ENCODE measurements at regions of chr1 and their contacts with region 1.

Region 1: GRCh38 chr1:147273409-147274336 is 31.2 kb downstream of the CHD1L start:
- DNase-seq: peak in 1 of 2 donors; percentile 73
- ATAC-seq: peak in 2 of 3 donors; percentile 61 to 64
- H3K4me3 ChIP-seq: no peak overlapping the region
- H3K4me3 Mint-ChIP-seq: no peak overlapping the region
- H3K27ac ChIP-seq: no peak overlapping the region
- H3K27ac Mint-ChIP-seq: no peak overlapping the region
- H3K4me1 ChIP-seq: no peaks in the 10 kb centered on the region
- H3K4me1 Mint-ChIP-seq: peaks cover 4 to 5% of the 10 kb centered on the region in 2 donors
- H3K27me3 ChIP-seq: no peaks in the 10 kb centered on the region
- H3K27me3 Mint-ChIP-seq: no peaks in the 10 kb centered on the region
- CTCF ChIP-seq: peak; percentile 65

Region 2: DNA sequence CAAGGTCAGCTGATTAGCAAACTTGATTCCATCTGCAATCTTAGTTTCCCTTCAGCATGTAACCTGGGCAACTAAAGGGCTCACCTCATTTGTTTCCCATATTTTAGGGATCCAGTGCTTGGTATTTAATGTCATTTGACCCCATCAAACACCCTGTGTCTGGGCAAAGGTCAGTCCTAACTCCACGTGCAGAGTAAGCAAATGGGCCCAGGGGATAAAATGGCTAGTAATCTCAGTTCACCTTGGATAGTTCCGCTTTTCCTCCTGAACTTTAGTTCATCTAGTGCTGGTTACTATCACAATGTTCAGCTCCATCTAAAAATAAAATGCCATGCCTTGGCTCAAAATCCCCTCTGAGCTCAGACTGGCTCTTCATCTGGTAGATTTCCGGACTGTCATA is 120.9 kb before region 1 on chr1:
- intact Hi-C with region 1: no loop called
- DNase-seq: no peak
- ATAC-seq: no peak
- H3K4me3 ChIP-seq: no peak overlapping the region
- H3K4me3 Mint-ChIP-seq: no peak overlapping the region
- H3K27ac ChIP-seq: no peak overlapping the region
- H3K27ac Mint-ChIP-seq: no peak overlapping the region
- H3K4me1 ChIP-seq: no peaks in the 10 kb centered on the region
- H3K4me1 Mint-ChIP-seq: no peaks in the 10 kb centered on the region
- H3K27me3 ChIP-seq: no peaks in the 10 kb centered on the region
- H3K27me3 Mint-ChIP-seq: no peaks in the 10 kb centered on the region
- CTCF ChIP-seq: no peak

Region 3: DNA sequence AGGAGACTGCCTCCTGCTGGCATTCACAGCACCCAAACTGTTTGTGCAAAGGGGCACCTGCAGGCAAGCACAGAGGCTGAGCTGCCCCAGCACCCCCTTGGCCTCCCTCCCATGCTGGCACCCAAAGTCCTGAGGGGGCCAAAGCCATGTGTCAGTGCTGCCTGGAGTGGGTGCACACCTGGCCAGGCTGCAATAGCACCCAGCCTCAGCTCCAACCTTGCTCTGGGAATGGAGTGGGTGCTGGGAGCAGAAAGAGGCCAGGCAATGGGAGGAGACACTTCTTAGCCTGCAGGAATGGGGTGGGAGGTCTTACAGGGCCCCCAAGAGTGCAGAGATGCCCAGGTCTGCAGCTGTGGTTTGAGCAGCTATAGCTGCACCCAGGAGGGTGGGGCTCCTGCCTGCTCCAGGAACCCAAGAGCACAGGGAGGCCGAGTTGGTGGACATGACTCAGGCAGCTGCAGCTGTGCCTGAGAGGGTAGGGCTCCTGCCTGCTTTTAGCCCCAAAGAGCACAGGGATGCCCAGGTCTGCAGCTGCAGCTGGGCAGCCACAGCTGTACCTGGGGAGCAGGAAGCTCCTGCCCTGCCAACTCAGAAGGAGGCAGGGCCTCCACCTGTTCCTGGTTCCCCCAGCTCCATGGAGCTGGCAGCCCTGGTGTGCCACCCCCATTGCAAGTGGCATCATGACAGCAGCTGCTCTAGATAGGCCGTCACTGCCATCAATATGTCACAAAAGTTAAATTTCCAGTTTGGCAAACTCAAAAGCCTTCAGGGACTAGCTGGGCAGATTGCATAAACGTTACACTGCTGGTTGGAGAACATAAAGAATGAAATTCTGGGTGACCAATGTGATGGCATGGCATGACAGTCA is 36.5 kb before region 1 on chr1:
- intact Hi-C with region 1: no loop called
- DNase-seq: no peak
- ATAC-seq: no peak
- H3K4me3 ChIP-seq: no peak overlapping the region
- H3K4me3 Mint-ChIP-seq: no peak overlapping the region
- H3K27ac ChIP-seq: no peak overlapping the region
- H3K27ac Mint-ChIP-seq: no peak overlapping the region
- H3K4me1 ChIP-seq: peaks cover 3% of the 10 kb centered on the region
- H3K4me1 Mint-ChIP-seq: peaks cover 4% of the 10 kb centered on the region in 2 donors
- H3K27me3 ChIP-seq: no peaks in the 10 kb centered on the region
- H3K27me3 Mint-ChIP-seq: peaks cover 0 to 10% of the 10 kb centered on the region in 2 donors
- CTCF ChIP-seq: no peak

Region 4: DNA sequence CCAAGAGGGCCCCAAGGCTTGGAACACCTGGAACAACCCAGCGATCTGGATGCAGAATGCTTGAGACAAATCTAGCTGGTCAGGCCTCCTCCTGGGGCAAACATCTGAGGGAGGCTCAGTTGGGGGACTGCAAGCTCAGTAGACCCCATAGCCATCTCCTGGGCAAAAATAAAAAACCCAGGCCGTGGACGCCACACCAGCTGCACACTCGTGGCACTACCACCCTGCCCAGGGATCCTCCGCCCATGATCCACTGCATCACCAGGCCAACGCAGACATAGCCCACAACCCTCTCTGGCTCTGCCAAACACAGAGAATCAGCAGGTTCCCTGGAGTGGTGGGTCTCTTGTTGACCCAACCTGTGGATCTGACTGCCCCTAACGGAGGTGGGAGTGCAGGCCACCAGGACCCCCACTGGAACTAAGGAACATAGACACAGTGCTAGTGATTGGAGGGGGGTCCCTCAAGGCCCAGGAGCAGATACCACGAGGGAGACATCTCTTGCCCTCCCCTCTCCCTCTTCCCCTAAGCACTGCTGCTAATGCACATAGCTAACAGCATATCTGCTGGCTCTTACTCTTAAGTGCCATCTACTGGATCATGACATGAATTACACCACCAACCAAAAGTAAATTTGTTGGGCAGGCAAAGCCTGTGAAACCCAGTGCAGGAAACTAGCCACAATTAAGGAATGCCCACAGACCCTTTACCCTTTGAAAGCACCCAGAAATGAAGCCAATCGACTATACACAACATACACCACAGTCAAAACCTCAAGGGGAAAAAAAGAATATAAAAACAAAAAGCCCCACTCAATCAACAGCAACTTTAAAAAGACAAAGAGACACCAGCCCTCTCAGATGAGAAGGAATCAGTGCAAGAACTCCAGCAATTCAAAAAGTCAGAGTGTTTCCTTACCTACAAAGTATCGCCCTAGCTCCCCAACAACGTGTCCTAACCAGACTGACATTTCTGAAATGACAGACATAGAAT is 116.2 kb after region 1 on chr1:
- intact Hi-C with region 1: loop called (anchors 5 kb)
- DNase-seq: peak in 1 of 2 donors; percentile 56
- ATAC-seq: peak; percentile 62 to 85 (median 67)
- H3K4me3 ChIP-seq: no peak overlapping the region
- H3K4me3 Mint-ChIP-seq: no peak overlapping the region
- H3K27ac ChIP-seq: no peak overlapping the region
- H3K27ac Mint-ChIP-seq: no peak overlapping the region
- H3K4me1 ChIP-seq: no peaks in the 10 kb centered on the region
- H3K4me1 Mint-ChIP-seq: no peaks in the 10 kb centered on the region
- H3K27me3 ChIP-seq: no peaks in the 10 kb centered on the region
- H3K27me3 Mint-ChIP-seq: peaks cover 20 to 27% of the 10 kb centered on the region in 2 donors
- CTCF ChIP-seq: peak; percentile 63

Measured in natural killer cell (primary cell).